HEK293 (cell line): ENCODE measurements at regions of chr14 and their contacts with region 1.

Region 1: DNA sequence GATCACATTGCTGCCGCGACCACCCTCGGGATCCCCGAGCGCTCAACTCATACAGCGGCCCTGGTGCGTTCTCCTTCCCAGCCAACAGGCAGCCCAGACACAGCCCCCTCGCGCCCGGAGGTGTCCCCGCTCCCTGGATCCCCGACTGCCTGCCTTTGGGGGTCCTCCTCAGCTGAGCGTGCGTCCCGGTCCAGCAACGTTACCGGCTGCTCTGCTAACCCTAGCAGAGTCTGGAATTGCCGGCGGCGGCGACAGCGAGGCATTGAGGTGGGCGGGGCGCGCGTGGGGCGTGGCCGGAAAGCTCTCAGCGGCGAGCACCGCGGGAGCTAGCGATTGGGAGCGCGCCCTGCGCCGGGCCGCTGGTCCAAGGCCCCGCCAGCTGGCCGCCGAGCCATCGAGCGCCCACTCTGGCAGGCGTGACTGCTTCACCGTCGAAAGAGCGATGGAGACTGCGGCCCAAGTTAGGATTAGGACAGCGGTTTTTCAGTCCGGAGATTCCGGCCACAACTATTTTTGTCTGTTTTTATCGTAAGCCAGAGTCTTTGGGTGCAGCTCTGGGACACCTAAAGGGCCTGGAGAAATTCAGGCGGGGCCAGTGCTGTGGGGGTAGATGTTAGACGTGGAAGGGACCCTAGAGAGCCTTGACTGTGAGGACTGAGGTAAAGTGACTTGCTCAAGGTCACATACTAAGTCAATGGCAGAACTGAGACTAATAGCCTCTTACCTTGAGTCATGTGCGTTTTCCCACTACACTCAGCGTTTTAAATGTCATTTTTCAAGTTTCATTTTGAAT is at the start of gene HEATR5A:
- H3K4me3 ChIP-seq: peak within 1 kb of the TSS; percentile 99
- H3K27ac ChIP-seq: peak within 1 kb of the TSS; percentile 68
- H3K4me1 ChIP-seq: peaks cover 8% of the 10 kb centered on the region
- CTCF ChIP-seq: peak; percentile 30

Region 2: DNA sequence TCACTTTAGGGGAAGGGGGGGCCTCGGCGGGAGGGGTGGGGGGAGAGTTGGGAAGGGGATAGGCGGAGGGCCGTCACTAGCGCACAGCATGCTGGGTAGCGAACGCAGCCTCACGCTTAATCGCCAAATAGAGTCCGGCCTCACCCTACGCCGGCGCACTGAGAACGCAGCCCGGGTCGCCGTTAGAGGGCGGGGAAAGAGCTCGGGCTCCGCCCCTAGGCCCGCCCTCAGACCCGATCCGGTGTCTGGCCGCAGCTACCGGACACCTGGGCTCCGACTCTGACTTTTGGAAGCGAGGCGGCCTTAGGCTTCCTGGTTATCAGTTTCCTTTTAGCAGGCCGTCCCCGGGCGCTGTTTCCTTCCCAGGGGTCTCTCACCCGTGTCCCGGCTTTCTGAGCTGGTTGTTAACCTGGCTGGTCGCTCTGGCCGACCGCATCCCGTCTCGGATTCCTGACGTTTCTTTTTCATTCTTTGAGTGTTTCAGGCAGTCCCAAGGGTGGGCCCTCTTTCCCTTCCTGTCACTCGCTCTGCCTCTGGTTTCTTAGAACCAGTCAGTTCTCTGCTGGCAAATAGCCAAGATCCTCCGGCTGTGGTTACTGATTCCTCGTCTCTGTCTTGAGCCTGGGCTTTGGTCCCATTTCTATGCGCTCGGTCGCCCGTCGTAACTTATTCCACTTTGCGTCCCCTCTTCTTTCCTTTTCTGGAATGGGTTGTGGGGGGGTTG is 394.0 kb before region 1 on chr14:
- CTCF ChIA-PET with region 1: no interaction called
- POLR2A ChIA-PET with region 1: interaction called, 11 read pairs
- H3K4me3 ChIP-seq: peak overlapping the region; percentile 100
- H3K27ac ChIP-seq: peak overlapping the region; percentile 98
- H3K4me1 ChIP-seq: peaks cover 14% of the 10 kb centered on the region
- CTCF ChIP-seq: no peak

Region 3: DNA sequence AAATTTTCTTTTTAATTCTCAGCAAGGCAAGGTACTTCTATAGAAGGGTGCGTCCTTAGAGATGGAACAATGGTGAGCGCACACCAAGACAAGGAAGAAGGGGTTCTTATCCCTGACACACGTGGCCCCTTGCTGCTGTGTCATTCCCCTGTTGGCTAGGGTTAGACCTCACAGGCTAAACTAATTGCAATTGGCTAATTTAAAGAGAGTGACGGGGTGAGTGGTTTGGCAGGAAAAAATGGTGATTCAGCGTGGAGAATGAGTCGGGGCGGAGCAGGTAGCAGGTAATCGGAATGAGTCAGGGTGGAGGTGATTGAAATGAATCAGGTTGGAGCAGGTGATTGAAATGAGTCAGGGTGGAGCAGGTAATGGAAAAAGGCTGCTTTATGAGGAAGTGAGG is 176.7 kb before region 1 on chr14:
- CTCF ChIA-PET with region 1: no interaction called
- POLR2A ChIA-PET with region 1: no interaction called
- H3K4me3 ChIP-seq: no peak overlapping the region
- H3K27ac ChIP-seq: no peak overlapping the region
- H3K4me1 ChIP-seq: no peaks in the 10 kb centered on the region
- CTCF ChIP-seq: no peak

Region 4: DNA sequence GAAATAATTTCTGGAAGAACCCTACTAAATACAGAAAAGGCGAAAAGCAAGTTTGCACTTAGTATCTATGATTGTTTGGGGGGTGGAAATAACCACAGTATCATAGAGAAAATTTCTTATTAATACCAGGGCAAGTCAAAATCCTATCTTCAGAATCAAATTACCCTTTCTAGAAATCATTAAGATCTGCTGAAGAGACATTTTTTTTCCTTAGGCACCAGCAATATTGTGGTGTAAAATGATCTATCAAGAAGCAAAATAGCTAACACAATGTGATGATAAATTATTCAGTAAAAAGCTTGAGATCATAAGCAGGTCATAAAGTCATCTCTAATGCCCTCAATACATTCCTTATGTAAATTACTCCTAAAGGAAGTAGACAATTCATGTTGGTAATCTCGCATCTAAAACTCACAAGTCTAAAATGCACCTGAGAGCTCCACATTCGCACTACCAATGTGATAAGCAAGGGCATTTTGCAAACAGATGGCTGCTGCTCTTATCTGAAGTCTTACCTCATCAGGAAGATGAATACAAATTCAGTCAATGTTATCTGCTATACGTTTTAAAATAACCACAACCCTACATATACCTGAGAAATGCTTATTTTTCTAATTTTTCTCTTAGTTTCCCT is 14.8 kb before region 1 on chr14:
- CTCF ChIA-PET with region 1: interaction called, 3 read pairs
- POLR2A ChIA-PET with region 1: interaction called, 15 read pairs
- H3K4me3 ChIP-seq: no peak overlapping the region
- H3K27ac ChIP-seq: no peak overlapping the region
- H3K4me1 ChIP-seq: peaks cover 10% of the 10 kb centered on the region
- CTCF ChIP-seq: no peak

Region 5: DNA sequence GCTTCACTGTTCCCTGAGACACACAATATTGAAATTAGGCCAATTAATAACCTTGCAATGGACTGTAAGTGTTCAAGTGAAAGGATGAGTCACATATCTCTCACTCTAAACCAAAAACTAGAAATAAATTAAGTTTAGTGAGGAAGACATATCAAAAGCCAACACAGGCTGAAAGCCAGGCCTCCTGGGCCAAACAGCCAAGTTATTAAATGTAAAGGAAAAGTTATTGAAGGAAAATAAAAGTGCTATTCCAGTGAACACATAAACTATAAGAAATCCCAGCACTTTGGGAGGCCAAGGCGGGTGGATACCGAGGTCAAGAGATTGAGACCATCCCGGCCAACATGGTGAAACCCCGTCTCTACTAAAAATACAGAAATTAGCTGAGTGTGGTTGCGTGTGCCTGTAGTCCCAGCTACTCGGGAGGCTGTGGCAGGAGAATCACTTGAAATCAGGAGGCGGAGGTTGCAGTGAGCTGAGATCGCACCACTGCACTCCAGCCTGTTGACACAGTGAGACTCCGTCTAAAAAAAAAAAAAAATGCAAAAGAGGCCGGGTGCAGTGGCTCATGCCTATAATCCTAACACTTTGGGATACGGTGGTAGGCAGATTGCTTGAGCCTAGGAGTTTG is 10.2 kb after region 1 on chr14:
- CTCF ChIA-PET with region 1: interaction called, 7 read pairs
- POLR2A ChIA-PET with region 1: interaction called, 13 read pairs
- H3K4me3 ChIP-seq: no peak overlapping the region
- H3K27ac ChIP-seq: no peak overlapping the region
- H3K4me1 ChIP-seq: no peaks in the 10 kb centered on the region
- CTCF ChIP-seq: no peak

Region 6: DNA sequence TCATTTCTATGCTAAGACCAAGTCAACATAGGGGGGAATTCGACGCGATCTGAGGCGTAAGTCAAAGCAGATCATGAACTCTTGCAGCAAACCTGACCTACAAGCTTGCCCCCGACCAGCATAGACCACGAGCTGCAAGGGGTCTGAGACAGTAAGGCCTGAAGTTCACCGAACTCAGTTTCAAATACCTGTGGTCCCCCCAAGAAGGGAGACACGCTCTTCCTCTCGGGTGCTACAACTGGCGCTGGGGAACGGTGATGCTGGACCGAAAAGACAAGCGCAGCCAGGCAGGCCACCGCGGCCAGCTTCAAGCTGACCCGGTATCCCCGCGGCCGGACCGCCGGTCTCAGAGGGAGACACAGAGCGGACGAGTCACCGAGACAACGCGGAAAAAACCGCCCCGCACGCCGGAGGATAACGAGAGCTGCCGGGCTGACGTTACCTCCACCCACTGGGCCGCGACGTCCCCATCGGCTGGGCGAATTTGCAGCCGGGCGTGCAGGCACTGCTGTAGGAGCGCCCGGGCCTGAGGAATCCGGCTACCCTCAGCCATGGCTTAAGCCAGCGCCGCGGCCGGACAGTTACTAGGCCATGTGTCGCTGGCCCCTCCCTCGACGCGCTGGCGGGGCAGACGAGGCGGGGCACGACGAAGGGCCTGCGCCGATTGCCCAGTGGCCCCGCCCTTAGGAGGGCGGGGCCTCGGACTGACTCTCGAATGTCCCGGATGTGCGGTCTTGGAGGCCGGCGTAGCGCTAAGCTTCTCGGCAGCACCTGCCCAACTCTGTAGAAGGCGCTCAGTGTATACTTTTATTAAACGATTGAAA is 36.5 kb after region 1 on chr14 and contains the start of gene DTD2:
- CTCF ChIA-PET with region 1: interaction called, 5 read pairs
- POLR2A ChIA-PET with region 1: interaction called, 23 read pairs
- H3K4me3 ChIP-seq: peak within 1 kb of the TSS; percentile 77
- H3K27ac ChIP-seq: peak within 1 kb of the TSS; percentile 82
- H3K4me1 ChIP-seq: peaks cover 9% of the 10 kb centered on the region
- CTCF ChIP-seq: no peak; the same call in 1 of the 2 replicates

Region 7: DNA sequence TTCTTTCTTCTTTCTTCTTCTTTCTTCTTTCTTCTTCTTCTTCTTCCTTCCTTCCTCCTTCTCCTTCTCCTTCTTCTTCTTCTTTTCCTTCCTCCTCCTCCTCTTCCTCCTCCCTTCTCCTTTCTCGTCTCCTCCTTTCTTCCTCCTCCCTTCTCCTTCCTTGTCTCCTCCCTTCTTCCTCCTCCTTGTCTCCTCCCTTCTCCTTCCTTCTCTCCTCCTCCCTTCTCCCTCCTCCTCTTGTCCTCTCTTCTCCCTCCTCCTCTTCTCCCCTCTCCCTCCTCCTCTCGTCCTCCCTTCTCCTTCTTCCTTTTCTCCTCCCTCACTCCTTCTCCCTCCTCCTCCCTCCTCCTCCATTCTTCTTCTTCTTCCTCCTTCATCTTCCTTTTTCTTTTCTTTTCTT is 185.2 kb after region 1 on chr14:
- CTCF ChIA-PET with region 1: no interaction called
- POLR2A ChIA-PET with region 1: no interaction called
- H3K4me3 ChIP-seq: no peak overlapping the region
- H3K27ac ChIP-seq: no peak overlapping the region
- H3K4me1 ChIP-seq: no peaks in the 10 kb centered on the region
- CTCF ChIP-seq: no peak